Left ventricle myocardium superior (tissue), 1 donor: ENCODE measurements at regions of chr20 and their contacts with region 1.

Region 1: DNA sequence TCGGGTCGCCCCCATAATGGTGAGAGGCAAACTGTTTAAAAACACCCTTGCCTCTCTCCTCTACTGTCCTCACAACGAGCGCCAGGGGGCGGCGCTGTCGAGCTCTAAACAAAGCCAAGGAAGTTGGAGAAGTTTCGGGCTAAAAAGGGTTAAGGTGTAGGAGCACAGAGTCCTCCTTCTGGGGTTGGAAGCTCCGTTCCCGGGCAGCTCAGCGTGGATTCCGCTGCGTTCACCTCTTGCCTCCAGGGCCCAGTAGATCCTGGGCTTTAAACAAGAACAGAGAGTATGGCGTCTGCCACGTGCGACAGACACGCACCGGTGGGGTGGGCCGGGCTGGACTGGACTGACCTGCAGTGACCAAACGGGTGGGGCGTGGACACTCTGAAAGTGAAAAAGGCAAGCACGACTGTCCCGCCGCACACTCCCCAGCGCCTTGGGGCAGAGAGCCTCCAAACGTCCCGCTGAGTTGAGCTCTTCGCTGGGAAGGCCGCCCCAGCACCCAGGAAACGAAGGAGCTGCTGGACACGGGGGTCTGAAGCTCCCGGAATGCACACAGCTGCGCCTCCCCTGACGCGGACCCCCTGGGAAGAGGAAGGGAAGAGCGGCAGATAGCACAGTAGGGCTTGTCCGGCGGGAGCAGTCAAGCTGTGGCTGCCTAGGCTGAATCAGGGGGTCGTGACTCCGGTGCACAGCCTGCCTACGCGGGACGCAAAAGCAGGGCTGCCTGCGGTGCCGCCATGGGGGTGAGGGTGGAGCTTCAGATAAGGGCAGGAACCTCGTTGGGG is 1.6 kb upstream of the THBD start:
- DNase-seq: peak; percentile 91
- ATAC-seq: peak; percentile 60

Region 2: DNA sequence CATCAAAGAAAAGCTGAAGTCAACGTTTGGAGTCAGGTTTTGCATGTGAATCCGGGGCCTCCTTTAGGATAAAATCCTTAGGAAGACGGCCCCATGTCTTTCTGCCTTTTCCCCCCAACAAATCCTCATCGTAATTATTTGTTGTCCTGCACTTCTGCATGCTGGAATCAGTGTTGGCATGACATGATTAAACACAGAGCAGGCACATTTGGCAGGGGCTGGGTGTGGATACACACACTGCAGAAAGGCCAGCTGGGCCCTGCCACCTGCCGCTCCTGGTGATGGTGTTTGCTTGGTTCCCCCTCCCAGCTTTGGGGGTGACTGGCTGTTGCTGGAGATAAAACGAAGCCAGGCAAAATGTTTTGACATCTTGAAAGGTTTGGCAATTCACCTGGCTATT is 420.3 kb before region 1 on chr20:
- intact Hi-C with region 1: no loop called
- DNase-seq: no peak
- ATAC-seq: no peak

Region 3: DNA sequence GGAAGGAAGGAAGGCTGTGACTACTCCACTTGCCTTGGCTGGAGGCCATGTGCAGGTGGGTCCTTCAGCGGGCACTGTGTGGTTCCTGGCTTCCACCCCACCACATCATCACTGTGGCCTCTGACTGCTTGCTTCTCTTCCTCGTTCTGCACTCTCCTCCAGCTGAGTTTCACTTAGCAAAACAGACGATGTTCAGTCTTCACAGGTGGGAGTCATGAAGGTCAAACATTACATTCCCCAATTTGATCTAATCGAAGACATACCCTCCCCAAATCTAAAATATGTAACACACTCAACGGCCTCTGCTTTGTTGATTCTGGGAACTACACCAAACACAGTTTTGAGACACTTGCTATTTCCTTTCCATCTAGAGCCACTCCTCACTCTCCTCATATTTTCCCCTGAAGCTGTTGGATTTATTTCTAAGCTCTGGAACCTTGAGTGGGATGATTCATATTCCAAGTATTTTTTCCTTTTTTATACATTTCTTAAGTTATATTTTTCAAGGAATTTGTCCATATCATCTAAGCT is 334.2 kb before region 1 on chr20:
- intact Hi-C with region 1: loop called (anchors 10 kb)
- DNase-seq: no peak
- ATAC-seq: no peak

Region 4: DNA sequence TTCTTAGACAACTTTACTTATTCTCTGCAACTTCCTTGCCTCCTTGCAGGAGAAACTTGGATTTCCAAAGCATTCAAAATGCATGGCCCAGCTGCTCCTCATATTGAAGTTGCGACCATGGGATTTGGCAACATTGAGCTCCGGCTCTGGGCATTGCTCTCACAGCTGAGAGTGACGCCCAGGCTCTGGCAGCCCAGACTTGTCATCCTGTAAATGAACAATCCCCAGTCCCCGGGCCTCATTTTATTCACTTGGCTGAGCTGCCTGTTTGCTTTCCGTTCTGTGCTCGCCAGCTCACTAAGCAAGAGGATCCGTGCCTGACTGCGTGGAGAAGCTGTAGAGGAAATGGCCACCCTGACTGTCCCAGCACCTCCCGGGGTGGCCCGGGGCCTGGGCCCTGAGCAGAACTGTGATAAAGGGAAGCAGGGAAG is 154.6 kb after region 1 on chr20:
- intact Hi-C with region 1: no loop called
- DNase-seq: peak; percentile 83
- ATAC-seq: peak; percentile 94

Region 5: DNA sequence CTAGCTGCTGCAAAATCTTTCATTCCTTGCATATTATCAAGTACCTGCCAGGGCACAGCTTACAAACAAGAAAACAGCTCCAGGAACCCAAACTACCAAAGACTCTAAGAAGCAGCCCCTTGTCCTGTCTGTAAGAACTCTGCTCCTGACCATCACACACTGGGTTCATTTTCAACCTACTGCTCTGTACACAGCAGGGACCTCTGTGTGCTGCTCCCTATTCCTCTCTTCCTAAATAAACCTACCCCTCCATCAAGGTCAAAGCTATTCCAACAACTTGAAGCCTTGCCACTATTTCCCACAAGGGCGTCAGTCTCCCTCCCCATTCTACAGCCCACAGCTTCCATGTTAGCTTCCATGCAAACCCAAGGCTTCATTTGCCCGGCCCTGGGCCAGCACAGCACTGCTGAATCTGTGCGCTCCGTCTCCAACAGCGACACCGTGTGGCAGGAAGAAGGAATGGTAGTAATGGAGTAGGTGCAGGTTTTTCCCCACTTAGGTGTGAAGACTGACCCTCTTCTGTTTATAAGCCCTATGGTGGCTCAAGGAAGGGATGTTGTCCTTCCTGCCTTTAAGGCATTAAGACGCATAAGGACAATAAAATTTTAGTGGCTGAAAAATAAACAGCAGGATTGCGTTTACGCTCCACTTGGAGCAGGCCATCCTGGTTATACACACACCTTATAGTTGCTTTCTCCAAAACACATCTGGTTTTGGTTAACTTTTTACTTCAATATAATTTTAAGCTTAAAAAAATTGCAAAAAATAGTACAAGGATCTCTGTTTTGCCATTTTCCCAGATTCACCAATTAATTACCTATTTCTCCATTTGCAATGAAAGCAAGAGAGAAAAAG is 184.4 kb after region 1 on chr20:
- intact Hi-C with region 1: loop called (anchors 5 kb)
- DNase-seq: peak; percentile 82
- ATAC-seq: peak; percentile 97